ENCODE measurements at regions of chr21 and their contacts with region 1.

Region 1: DNA sequence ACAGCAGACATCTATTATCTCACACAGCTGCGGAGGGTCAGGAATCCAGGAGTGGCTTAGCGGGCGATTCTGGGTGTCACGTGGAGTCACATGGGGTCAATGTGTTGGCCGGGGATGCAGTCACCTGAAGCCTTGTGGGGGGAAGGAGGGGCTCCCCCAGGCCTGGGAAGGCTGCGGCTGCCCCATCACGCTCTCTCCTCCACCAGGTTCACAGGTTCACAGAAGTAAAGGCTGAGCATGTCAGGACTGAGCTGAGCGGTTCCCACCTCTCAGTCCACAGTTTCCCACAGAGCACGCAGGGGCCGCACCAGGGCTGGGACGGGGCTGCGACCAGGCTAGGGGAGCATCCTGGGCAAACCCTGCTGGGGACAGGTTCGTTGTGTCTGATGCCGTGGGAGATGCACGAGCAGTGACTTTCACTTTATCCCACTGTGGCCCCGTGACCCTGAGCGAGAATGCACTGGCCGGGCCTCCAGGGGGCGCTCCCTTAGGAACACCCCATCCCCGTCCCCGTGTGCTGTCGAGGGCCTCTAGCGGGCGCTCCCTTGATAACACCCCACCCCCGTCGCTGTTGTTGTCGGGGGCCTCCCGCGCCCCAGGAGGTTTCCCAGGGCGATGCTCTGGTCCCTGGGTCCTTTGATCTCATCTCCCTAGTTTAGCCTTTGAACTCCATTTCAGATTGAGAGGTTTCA is 73.2 kb upstream of the TRAPPC10 start:
- DNase-seq: peak in 9 of 10 donors; percentile 70 to 84 (median 79)
- H3K4me3 ChIP-seq: peak overlapping the region; percentile 21 to 69 (median 50)
- H3K27ac ChIP-seq: peak overlapping the region in 19 of 59 donors; percentile 8 to 81 (median 46)
- H3K27me3 ChIP-seq: no peaks in the 10 kb centered on the region
- CTCF ChIP-seq: peak; percentile 54 to 99 (median 93)

Region 2: DNA sequence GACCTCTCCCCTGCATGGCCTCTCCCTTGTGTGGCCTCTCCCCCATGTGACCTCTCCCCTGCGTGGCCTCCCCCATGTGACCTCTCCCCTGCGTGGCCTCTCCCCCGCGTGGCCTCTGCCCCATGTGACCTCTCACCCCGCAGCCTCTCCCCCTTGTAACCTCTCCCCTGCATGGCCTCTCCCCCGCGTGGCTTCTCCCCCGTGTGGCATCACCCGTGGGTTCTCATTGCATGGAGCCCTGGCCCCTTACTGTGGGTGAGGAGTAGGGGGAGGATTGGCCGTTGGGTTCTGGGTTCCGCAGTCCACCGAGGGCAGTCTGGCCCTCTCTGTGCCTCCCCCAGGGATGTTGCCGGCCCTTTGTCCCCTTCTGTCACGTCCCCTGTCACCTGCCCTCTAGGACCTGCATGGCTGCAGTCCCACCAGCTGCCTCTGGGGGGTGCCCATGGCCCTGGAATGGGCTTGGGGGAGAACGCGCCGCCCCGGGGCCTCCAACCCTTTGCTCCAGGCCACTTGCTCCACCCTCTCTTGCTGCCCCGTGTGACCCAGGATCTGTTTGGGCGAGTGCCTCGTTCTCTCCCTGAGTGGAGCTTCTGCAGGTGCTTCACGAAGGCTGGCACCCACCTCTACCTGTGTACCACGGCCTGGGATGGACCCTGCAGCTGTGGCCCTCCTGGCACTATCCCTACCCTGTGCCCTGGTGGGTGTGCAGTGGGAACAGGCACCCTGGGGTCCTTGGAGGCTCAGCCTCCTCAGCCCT is 128.2 kb before region 1 on chr21:
- intact Hi-C with region 1: loop called (anchors 2 to 5 kb)
- DNase-seq: peak in 9 of 10 donors; percentile 71 to 87 (median 83)
- H3K4me3 ChIP-seq: peak overlapping the region in 22 of 59 donors; percentile 1 to 43 (median 20)
- H3K27ac ChIP-seq: peak overlapping the region in 3 of 59 donors; percentile 3 to 71 (median 53)
- H3K27me3 ChIP-seq: no peaks in the 10 kb centered on the region
- CTCF ChIP-seq: peak; percentile 73 to 96 (median 93)

Region 3: GRCh38 chr21:43866260-43866629 is 72.7 kb before region 1 on chr21:
- intact Hi-C with region 1: loop called in 1 of 2 experiments (anchors 5 kb)
- DNase-seq: peak in 7 of 10 donors; percentile 23 to 46 (median 41)
- H3K4me3 ChIP-seq: peak overlapping the region; percentile 54 to 89 (median 80)
- H3K27ac ChIP-seq: peak overlapping the region in 50 of 59 donors; percentile 2 to 93 (median 76)
- H3K27me3 ChIP-seq: no peaks in the 10 kb centered on the region
- CTCF ChIP-seq: no peak

Region 4: DNA sequence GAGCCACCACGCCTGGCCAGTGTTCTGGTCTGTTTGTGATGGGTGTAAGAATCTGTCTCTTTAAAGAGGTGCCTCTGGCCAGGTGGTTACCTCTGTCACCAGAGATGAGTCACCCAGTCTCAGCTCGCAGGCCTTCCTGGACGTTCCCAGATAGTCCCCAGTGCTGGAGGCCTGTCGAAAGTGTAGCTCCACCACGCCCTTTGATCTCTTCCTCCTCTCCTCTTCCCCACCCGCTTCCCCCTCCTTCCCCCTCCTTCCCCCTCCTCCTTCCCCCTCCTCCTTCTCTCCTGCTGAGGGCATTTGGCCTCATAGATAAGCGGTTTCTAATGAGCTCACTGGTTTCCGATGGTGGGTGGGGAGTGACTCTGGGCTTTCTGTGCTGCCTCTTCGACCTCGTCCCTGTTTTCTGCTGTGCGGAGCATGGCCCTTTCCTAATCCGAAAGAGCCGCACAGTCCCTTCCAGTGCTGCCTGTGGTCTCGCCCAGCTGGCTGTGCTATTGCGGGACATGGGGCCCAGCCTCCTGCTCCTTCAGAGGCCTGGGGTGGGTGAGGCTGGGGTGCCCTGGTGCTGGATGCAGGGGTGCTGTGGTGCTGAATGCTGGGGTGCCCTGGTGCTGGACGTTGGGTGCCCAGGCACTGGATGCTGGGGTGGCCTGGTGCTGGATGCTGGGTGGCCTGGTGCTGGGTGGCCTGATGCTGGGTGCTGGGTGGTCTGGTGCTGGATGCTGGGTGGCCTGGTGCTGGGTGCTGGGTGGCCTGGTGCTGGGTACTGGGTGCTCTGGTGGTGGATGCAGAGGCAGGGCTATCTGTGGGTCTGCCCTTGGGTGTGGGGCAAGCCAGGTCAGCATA is 54.7 kb before region 1 on chr21:
- intact Hi-C with region 1: loop called in 1 of 2 experiments (anchors 5 kb)
- DNase-seq: peak in 3 of 10 donors; percentile 9 to 38 (median 30)
- H3K4me3 ChIP-seq: no peak overlapping the region
- H3K27ac ChIP-seq: peak overlapping the region in 17 of 59 donors; percentile 7 to 68 (median 40)
- H3K27me3 ChIP-seq: no peaks in the 10 kb centered on the region
- CTCF ChIP-seq: no peak

Region 5: DNA sequence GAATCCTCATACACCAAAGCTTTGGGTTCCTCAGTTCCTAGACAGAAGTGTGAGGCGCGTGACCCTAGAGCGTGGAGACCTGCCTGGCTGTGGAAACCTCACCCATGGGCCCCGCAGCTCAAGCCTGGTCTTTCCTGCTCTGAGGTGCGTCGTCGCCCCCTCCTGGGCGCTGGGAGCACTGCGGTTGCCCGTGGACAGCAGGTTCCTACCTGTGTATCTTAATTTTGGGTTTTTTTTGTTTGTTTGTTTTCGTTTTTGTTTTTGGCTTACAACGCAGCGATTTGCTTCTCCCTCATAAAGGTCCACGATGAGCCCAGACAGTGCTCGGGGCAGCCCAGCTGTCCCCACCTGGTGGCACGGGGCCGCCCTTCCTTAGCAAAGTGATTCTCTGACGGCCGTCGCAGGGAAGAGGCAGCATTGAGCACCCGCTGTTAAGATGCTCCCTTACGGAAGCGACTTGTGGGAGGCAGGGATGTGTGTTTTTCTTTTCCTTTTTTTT is 36.6 kb after region 1 on chr21:
- intact Hi-C with region 1: loop called (anchors 2 to 10 kb)
- DNase-seq: peak; percentile 82 to 90 (median 85)
- H3K4me3 ChIP-seq: peak overlapping the region in 11 of 59 donors; percentile 2 to 26 (median 21)
- H3K27ac ChIP-seq: peak overlapping the region in 20 of 59 donors; percentile 15 to 70 (median 44)
- H3K27me3 ChIP-seq: no peaks in the 10 kb centered on the region
- CTCF ChIP-seq: peak; percentile 60 to 98 (median 92)

Region 6: GRCh38 chr21:43984905-43985689 is 46.2 kb after region 1 on chr21:
- intact Hi-C with region 1: loop called in 1 of 2 experiments (anchors 10 kb)
- DNase-seq: no peak
- H3K4me3 ChIP-seq: no peak overlapping the region
- H3K27ac ChIP-seq: peak overlapping the region in 54 of 59 donors; percentile 5 to 98 (median 94)
- H3K27me3 ChIP-seq: no peaks in the 10 kb centered on the region
- CTCF ChIP-seq: no peak

Measured in dorsolateral prefrontal cortex (tissue), 120 donors.